Common myeloid progenitor, CD34-positive (primary cell): ENCODE measurements at regions of chr12 and their contacts with region 1.

Region 1: DNA sequence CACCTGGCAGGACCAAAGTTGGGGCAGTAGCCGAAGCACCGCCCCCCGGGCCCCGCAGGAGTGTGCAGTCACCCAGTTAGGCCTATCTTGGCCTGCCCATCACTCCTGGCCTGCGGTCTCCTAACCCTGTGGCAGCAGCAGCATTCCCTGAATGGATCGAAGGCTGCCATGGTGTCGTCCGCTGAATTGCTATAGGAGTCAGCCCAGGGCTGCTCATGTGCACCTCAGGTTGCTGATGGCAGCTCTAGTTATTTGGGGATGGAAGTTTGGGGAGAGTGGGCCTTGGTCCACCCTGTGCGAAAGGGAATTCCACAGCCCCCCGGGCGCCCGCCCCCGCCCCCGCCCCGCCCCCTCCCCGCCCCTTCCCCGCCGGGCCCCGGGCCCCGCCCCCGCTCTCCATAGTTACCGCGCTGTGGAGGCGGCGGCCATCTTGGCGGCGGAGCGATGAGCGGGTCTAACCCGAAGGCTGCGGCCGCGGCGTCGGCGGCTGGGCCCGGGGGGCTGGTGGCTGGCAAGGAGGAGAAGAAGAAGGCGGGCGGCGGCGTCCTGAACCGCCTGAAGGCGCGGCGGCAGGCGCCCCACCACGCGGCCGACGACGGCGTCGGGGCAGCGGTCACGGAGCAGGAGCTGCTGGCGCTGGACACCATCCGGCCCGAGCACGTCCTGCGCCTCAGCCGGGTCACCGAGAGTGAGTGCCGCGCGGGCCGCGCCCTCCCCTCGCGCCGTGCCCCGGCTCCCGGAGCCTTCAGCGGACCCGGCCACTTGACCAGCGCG is at the start of gene UNC119B:
- DNase-seq: peak; percentile 59 to 75 (median 72)
- H3K4me3 ChIP-seq: peak within 1 kb of the TSS; percentile 67 to 94 (median 87)
- H3K27ac ChIP-seq: peak within 1 kb of the TSS; percentile 85 to 89
- H3K4me1 ChIP-seq: peaks cover 0 to 28% (median 20%) of the 10 kb centered on the region in 4 experiments
- H3K27me3 ChIP-seq: no peaks in the 10 kb centered on the region

Region 2: DNA sequence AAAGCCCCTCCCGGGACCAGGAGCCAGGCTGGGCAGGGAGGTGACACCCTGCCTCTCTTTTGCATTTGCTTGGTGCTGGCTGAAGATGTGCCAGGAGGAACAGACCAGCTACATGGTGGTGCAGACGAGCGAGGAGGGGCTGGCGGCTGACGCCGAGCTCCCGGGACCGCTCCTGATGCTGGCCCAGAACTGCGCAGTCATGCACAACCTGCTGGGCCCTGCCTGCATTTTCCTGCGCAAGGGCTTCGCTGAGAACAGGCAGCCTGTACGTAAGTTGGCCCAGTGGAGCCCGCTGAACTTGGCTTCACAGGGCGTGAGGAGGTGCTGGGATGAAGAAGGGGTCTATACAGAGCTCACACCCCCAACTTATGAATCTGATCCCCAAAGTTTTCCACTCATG is 54.2 kb before region 1 on chr12:
- CTCF ChIA-PET with region 1: no interaction called
- POLR2A ChIA-PET with region 1: no interaction called
- DNase-seq: no peak
- H3K4me3 ChIP-seq: no peak overlapping the region
- H3K27ac ChIP-seq: no peak overlapping the region
- H3K4me1 ChIP-seq: no peaks in the 10 kb centered on the region
- H3K27me3 ChIP-seq: peaks cover 0 to 14% (median 0%) of the 10 kb centered on the region in 5 experiments

Region 3: GRCh38 chr12:120698665-120699064 is 11.6 kb before region 1 on chr12:
- CTCF ChIA-PET with region 1: interaction called, 30 read pairs
- POLR2A ChIA-PET with region 1: interaction called, 5 read pairs
- DNase-seq: peak in 2 of 3 donors; percentile 46 to 57
- H3K4me3 ChIP-seq: no peak overlapping the region
- H3K27ac ChIP-seq: peak overlapping the region in 1 of 2 experiments; percentile 46
- H3K4me1 ChIP-seq: peaks cover 0 to 13% (median 9%) of the 10 kb centered on the region in 4 experiments
- H3K27me3 ChIP-seq: no peaks in the 10 kb centered on the region

Region 4: GRCh38 chr12:120720234-120720986 is 10.2 kb after region 1 on chr12:
- CTCF ChIA-PET with region 1: interaction called, 18 read pairs
- POLR2A ChIA-PET with region 1: interaction called, 3 read pairs
- DNase-seq: peak; percentile 44 to 82 (median 76)
- H3K4me3 ChIP-seq: peak overlapping the region in 3 of 7 experiments; percentile 13 to 36 (median 14)
- H3K27ac ChIP-seq: peak overlapping the region in 1 of 2 experiments; percentile 74
- H3K4me1 ChIP-seq: peaks cover 33 to 69% (median 57%) of the 10 kb centered on the region in 4 experiments
- H3K27me3 ChIP-seq: no peaks in the 10 kb centered on the region